ENCODE measurements at regions of chrX and their contacts with region 1.

Region 1: DNA sequence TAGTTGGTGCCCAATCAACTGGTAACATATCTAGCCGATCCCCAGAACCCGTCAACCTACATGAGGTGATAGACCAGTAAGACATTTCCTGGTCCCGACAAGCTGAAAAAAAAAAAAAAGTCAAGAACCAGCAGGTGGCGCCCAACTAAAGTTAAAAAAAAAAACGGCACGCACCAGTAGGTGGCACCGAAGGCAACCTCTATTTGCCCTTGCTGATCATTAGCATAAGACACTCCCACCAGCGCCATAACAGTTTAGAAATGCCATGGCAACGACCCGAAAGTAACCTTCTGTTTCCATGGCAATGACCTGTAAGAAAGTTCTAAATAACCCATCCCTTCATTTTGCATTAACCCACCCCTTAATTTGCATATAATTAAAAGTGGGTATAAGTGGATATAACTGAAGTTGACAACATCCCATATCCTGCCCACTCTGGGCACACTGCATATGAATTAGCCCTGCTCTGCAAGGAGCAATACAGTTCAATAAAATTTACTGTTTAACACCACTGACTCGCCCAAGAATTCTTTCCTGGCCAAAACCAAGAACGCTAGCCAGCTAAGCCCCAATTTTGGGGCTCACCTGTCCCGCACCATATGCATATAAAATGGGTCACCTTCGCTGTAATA is 83.9 kb upstream of the SPANXB1 start:
- DNase-seq: peak; percentile 12 to 65
- H3K4me3 ChIP-seq: no peak overlapping the region
- H3K27ac ChIP-seq: no peak overlapping the region
- H3K4me1 ChIP-seq: no peaks in the 10 kb centered on the region
- H3K27me3 ChIP-seq: no peaks in the 10 kb centered on the region
- CTCF ChIP-seq: peak; percentile 85

Region 2: GRCh38 chrX:140848800-140849199 is 69.7 kb before region 1 on chrX:
- CTCF ChIA-PET with region 1: no interaction called
- POLR2A ChIA-PET with region 1: no interaction called
- intact Hi-C with region 1: no loop called
- DNase-seq: no peak
- H3K4me3 ChIP-seq: no peak overlapping the region
- H3K27ac ChIP-seq: no peak overlapping the region
- H3K4me1 ChIP-seq: no peaks in the 10 kb centered on the region
- H3K27me3 ChIP-seq: no peaks in the 10 kb centered on the region
- CTCF ChIP-seq: no peak

Region 3: DNA sequence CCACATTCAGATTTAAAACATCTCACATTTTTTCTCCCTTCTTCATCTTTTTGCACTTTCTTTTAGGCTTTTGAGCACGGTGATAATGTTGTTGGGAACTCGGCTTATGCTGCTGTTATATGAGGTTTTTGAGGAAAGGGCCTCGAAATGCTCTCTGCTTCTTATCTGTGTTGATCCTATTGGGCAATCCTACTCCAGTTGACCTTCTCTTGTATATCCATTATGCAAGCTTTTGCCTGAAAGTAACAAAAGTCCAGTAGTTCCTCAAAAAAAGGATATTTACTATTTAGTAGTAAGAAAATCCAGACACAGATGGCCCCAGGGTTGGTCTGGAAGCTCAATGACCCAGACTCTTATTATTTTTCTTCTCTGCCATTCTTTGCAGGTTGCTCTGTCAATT is 26.2 kb after region 1 on chrX:
- CTCF ChIA-PET with region 1: no interaction called
- POLR2A ChIA-PET with region 1: no interaction called
- intact Hi-C with region 1: no loop called
- DNase-seq: no peak
- H3K4me3 ChIP-seq: no peak overlapping the region
- H3K27ac ChIP-seq: no peak overlapping the region
- H3K4me1 ChIP-seq: no peaks in the 10 kb centered on the region
- H3K27me3 ChIP-seq: peaks cover 5% of the 10 kb centered on the region; the same call in 1 of the 2 replicates
- CTCF ChIP-seq: no peak

Region 4: DNA sequence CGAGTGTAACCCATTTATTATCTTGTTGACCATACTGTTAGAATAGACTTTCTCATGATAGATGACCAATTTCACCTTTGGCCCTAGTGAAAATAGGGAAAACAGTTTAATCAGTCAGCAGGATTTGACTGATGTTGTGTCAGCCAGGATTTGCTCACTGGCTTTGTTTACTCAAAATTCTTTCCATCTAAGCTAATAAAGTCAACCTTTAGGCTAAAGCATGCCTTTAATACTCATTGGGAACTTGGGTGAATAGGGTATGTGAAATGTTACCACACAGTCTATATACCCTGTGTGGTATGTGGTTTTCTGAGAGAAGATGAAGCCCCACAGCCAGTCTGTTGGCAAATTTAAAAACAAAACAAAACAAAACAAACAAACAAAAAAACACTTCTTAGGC is 65.2 kb after region 1 on chrX:
- CTCF ChIA-PET with region 1: no interaction called
- POLR2A ChIA-PET with region 1: no interaction called
- intact Hi-C with region 1: no loop called
- DNase-seq: no peak
- H3K4me3 ChIP-seq: no peak overlapping the region
- H3K27ac ChIP-seq: no peak overlapping the region
- H3K4me1 ChIP-seq: no peaks in the 10 kb centered on the region
- H3K27me3 ChIP-seq: no peaks in the 10 kb centered on the region
- CTCF ChIP-seq: no peak

Region 5: DNA sequence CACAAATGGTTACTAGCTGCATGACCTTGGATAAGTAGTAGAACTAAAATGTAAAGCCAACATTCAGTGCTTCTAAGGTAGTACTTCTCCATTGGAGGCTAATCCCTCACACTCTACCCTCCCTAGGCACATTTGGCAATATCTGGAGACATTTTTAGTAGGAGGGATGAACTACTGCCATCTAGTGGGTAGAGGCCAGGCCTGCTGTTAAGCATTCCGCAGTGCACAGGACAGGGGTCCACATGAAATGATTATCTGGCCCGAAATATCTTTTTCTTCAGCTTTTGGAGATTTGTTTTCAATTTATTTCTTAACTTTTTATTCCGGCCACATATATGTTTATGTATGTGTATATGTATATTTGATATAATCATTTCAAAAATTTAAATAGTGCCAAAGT is 359.8 kb after region 1 on chrX:
- CTCF ChIA-PET with region 1: interaction called, 4 read pairs
- POLR2A ChIA-PET with region 1: no interaction called
- intact Hi-C with region 1: loop called (anchors 1 kb)
- DNase-seq: peak in 1 of 2 experiments; percentile 8
- H3K4me3 ChIP-seq: no peak overlapping the region
- H3K27ac ChIP-seq: no peak overlapping the region
- H3K4me1 ChIP-seq: no peaks in the 10 kb centered on the region
- H3K27me3 ChIP-seq: peaks cover 7% of the 10 kb centered on the region; the same call in 1 of the 2 replicates
- CTCF ChIP-seq: peak; percentile 79

Measured in PC-9 (cell line).